Activated CD4-positive, alpha-beta T cell treated with anti-CD3 and anti-CD28 coated beads for 36 hours (primary cell): ENCODE measurements at regions of chr21 and their contacts with region 1.

Region 1: DNA sequence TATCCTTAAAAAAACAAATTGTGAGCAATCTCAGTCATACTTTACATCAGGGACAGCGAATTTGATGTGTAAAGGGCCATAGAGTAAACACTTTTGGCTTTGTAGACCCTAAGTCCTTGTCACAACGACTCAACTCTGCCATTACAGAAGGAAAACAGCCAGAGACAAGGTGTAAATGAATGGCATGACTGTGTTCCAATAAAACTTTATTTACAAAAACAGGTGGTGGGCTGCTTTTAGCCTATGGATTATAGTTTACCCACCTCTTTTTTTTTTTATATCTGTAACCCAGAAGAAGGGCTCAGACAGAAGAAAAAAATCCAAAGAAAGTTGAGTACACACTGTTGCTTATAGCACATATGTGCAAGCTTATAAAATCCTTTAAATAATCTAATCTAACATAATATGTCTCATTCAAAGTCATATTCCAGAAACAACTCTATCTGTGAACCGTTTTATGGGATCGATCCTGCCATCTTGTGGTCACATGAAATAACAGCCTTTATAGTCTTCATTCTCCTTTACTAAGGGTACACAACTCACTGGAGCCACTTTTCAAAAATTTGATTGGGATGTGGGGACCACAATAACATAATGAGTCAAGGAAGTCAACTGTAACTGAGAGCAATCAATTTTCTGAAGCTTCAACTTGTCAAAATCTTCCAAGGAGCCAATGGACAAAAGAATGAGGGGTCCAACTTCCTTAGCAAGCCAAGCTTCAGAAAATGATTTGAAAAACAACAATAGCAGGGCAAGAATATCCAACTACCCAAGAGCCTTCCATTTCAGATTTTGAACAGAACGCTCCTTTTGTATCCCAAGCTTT is 142.2 kb upstream of the KRTAP19-8 start:
- DNase-seq: peak; percentile 48
- ATAC-seq: no peak
- H3K4me3 Mint-ChIP-seq: peak overlapping the region; percentile 91
- H3K27ac Mint-ChIP-seq: peak overlapping the region; percentile 99
- H3K4me1 Mint-ChIP-seq: peaks cover 77% of the 10 kb centered on the region
- H3K27me3 Mint-ChIP-seq: no peaks in the 10 kb centered on the region

Region 2: DNA sequence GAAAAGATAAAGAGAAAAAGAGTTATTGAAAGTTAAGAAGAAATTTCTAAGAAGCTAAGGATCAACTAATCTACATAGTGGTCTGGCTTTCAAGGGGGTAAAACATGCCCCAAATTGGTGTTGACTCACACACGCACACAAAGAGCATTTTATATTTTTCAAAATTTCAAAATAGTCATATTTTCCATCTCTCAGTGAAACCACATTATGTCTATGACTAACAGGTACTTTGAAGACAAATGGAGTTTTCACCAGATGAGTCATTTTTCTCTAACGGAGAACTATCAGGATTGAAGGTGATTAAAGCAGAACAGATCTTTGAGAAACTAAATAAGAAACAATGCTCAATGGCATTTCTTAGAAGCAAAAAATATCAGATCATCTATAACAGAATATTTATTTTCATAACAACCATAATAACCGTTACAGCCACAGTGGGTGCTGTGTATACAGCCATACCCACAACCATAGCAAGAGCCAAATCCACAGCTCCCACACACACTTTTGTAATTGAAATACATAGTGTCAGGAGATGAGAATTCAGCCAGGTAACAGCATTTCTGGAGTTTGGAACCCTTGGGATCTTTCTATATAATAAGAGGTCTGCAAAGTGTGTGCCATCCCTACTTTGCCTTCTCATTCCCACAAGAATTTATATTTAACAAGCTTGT is 462.1 kb before region 1 on chr21 and contains the start of gene KRTAP21-3:
- CTCF ChIA-PET with region 1: no interaction called
- POLR2A ChIA-PET with region 1: no interaction called
- intact Hi-C with region 1: loop called in 1 of 2 experiments (anchors 5 kb)
- DNase-seq: peak; percentile 22
- ATAC-seq: peak; percentile 92
- H3K4me3 Mint-ChIP-seq: no peak within 1 kb of the TSS
- H3K27ac Mint-ChIP-seq: peak within 1 kb of the TSS; percentile 75
- H3K4me1 Mint-ChIP-seq: peaks cover 22% of the 10 kb centered on the region
- H3K27me3 Mint-ChIP-seq: peaks cover 4% of the 10 kb centered on the region
- total RNA-seq, gene KRTAP21-3: not detected

Region 3: GRCh38 chr21:31098576-31099005 is 81.9 kb before region 1 on chr21:
- CTCF ChIA-PET with region 1: interaction called, 20 read pairs
- POLR2A ChIA-PET with region 1: interaction called, 6 read pairs
- intact Hi-C with region 1: loop called (anchors 1 kb)
- DNase-seq: peak; percentile 86
- ATAC-seq: peak; percentile 89
- H3K4me3 Mint-ChIP-seq: no peak overlapping the region
- H3K27ac Mint-ChIP-seq: peak overlapping the region; percentile 38
- H3K4me1 Mint-ChIP-seq: peaks cover 21% of the 10 kb centered on the region
- H3K27me3 Mint-ChIP-seq: peaks cover 3% of the 10 kb centered on the region

Region 4: DNA sequence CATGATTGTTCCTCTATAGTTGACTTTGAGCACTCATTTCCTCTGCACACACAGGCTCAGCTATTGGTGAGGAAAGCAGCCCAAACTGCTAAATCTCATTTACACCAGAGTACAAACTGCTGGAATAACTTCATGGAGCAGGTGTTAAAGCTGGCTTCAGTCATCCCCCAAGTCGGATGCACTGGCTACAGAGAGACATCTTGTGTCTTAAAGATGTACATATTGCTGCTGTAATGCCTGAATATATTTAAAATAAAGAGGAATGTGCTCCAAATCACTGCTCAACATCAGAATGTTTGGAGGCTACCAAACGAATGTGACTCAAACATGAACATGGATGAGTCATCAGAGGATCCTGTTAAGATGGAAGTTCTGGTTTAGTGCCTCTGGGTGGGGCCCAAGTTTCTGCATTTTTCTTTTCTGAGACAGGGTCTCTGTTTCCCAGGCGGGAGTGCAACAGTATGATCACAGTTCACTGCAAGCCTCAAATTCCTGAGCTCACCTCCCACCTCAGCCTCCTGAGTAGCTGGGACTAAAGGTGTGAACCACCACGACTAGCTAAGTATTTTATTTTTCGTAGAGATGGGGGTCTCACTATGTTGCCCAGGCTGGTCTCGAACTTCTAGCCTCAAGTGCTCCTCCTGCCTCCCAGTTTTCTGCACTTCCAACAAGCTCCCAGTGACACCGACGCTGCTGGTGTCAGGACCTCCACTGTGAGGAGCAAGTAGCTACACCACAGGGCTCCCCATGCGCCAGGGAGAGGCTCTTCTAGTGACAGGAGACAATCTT is 63.1 kb before region 1 on chr21:
- CTCF ChIA-PET with region 1: interaction called, 5 read pairs
- POLR2A ChIA-PET with region 1: no interaction called
- intact Hi-C with region 1: loop called in 1 of 2 experiments (anchors 1 kb)
- DNase-seq: peak; percentile 32
- ATAC-seq: peak; percentile 83
- H3K4me3 Mint-ChIP-seq: no peak overlapping the region
- H3K27ac Mint-ChIP-seq: peak overlapping the region; percentile 30
- H3K4me1 Mint-ChIP-seq: peaks cover 15% of the 10 kb centered on the region
- H3K27me3 Mint-ChIP-seq: no peaks in the 10 kb centered on the region

Region 5: GRCh38 chr21:31132574-31133242 is 47.8 kb before region 1 on chr21:
- CTCF ChIA-PET with region 1: interaction called, 12 read pairs
- POLR2A ChIA-PET with region 1: interaction called, 9 read pairs
- intact Hi-C with region 1: loop called (anchors 1 kb)
- DNase-seq: peak; percentile 84
- ATAC-seq: peak; percentile 75
- H3K4me3 Mint-ChIP-seq: peak overlapping the region; percentile 43
- H3K27ac Mint-ChIP-seq: peak overlapping the region; percentile 92
- H3K4me1 Mint-ChIP-seq: peaks cover 60% of the 10 kb centered on the region
- H3K27me3 Mint-ChIP-seq: no peaks in the 10 kb centered on the region

Region 6: DNA sequence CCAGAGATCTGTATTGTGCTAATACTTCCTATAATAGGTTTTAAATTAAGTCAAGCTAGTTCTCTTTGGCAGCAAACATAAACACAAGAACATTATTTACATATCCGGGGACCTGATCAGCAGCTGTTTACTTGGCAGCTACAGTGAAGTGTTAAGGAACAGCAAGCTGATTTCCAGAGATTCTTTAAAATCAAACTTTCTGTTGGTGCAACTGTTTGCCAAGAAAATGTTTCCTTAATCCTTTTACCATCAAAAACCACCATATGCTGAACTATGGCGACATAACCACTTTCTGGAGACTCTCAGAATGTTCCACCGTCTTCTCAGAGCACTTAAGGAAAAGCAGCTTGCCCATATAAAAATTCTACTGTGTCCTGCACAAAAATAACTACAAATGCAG is 35.2 kb before region 1 on chr21:
- CTCF ChIA-PET with region 1: no interaction called
- POLR2A ChIA-PET with region 1: no interaction called
- intact Hi-C with region 1: no loop called
- DNase-seq: no peak
- ATAC-seq: no peak
- H3K4me3 Mint-ChIP-seq: no peak overlapping the region
- H3K27ac Mint-ChIP-seq: no peak overlapping the region
- H3K4me1 Mint-ChIP-seq: peaks cover 30% of the 10 kb centered on the region
- H3K27me3 Mint-ChIP-seq: no peaks in the 10 kb centered on the region

Region 7: DNA sequence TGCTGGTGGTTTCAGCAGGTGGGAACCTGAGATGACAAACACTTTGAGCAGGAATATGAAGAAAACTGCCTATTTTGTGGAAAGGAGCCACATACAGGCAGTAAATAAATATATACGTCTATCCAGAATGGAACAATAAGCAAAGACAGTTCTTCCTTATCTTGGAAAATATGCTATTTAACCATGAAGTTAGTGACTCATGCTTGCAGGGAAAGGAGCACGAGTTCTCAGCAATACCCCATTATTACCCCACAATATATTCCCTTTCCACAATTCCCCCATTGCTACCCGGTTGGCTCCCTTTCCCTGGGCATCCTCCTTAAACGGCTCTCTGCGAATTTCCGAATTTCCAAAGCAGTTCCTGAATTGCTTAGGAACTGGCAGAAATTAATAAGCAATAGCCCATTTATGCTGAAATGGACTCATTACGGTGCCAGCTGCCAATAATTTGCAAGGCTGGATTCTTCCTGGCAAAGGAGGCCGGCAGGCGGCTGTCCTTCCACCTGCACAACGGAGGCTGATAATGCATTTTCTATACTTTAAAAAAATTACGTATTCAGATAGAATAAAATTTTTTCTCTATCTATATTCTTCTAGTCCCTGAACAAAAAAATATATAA is 98.2 kb after region 1 on chr21:
- CTCF ChIA-PET with region 1: no interaction called
- POLR2A ChIA-PET with region 1: no interaction called
- intact Hi-C with region 1: no loop called
- DNase-seq: no peak
- ATAC-seq: no peak
- H3K4me3 Mint-ChIP-seq: no peak overlapping the region
- H3K27ac Mint-ChIP-seq: no peak overlapping the region
- H3K4me1 Mint-ChIP-seq: peaks cover 26% of the 10 kb centered on the region
- H3K27me3 Mint-ChIP-seq: no peaks in the 10 kb centered on the region

Region 8: DNA sequence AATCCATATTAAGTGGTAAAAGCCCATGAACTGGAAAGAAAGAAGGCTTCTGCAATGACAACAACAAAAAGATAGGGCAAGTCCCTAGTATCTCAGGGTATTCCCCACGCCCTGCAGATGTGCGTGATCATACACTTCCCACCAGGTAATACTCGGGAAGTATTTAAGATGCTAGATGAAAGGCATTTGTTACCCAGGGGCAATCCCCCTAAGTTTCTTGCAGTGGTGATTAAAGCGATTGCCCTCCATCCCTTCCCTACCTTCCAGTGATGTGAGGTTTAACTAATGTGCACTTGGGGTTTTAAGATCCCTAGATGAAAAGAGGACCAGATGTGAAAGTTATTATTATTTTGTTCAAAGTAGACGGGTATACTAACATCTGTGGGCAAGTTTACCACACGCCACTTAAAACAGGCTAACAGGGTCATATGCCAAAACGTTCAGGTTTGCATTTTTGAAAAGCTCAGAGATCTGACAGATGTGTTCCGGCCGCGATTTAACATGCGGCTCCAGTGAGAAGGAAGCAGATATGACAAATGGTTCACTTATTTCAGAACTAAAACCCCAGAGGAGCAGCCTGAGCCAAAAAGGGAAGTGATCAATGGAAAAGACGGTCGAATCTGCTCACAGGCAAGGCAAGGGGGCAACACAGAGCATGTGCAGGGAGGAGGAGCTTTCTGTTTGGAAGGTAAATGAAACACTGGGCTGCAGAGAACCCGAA is 146.2 kb after region 1 on chr21:
- CTCF ChIA-PET with region 1: interaction called, 3 read pairs
- POLR2A ChIA-PET with region 1: interaction called, 5 read pairs
- intact Hi-C with region 1: loop called in 1 of 2 experiments (anchors 2 kb)
- DNase-seq: peak; percentile 80
- ATAC-seq: peak; percentile 93
- H3K4me3 Mint-ChIP-seq: peak overlapping the region; percentile 28
- H3K27ac Mint-ChIP-seq: peak overlapping the region; percentile 89
- H3K4me1 Mint-ChIP-seq: peaks cover 32% of the 10 kb centered on the region
- H3K27me3 Mint-ChIP-seq: no peaks in the 10 kb centered on the region

Region 9: GRCh38 chr21:31659536-31660258 is 479.2 kb after region 1 on chr21 and contains the start of gene SOD1:
- CTCF ChIA-PET with region 1: no interaction called
- POLR2A ChIA-PET with region 1: no interaction called
- intact Hi-C with region 1: loop called (anchors 2 to 5 kb)
- DNase-seq: peak; percentile 97
- ATAC-seq: peak; percentile 93
- H3K4me3 Mint-ChIP-seq: peak within 1 kb of the TSS; percentile 88
- H3K27ac Mint-ChIP-seq: peak within 1 kb of the TSS; percentile 99
- H3K4me1 Mint-ChIP-seq: peaks cover 68% of the 10 kb centered on the region
- H3K27me3 Mint-ChIP-seq: no peaks in the 10 kb centered on the region
- total RNA-seq, gene SOD1: 232 to 284 TPM